A549 (cell line): ENCODE measurements at regions of chr3 and their contacts with region 1.

Region 1: DNA sequence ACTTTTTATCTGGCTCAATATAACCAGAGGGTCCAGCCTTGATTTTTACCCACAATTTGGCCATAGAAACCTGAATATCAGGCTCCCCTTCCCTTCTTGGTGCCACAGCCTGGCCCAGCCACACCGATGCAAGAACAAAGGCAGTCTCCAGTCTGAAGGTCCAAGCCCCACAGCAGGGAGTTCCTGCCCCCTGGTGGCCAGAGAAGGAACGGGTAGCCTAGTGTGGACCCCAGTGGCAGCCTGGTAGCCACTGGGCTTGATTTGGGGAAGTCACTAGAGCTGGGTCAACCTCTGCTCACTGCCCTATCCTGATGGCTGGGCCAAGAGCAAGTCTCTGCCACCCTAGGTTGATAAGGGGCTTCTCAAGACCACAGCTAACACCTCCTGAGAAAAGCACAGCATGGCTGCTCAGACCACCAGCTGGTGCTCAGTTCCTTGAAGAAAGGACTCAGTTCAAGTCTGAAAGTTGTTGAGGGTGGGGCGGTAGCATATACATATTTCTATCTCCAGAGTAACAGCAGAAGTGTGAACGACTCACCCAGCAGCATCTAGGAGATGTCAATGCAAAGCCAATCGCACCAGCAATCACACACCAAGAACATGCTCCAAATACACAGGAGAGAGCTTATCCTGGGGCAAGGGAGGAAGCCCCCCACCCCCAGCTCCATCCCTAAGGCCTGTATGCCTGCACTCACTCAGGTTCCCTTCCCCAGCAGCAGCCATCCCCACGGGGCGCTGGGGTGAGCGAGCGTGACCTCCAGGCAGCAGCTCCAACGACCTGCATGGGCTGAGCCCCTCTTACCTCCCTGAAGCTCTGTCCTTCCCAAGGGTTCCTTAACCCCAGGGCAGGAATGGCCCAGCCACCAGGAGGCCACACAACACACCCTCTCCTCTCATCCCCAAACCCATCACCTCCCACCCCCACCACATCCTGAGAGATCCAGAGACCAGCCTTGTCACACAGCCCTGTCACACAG is 7.6 kb downstream of the PFKFB4 start:
- DNase-seq: peak in 1 of 2 experiments; percentile 69
- ATAC-seq: peak; percentile 45 to 90
- H3K4me3 ChIP-seq: no peak overlapping the region
- H3K27ac ChIP-seq: 0 out of 6 replicates have a peak overlapping the region, but pooled peaks of 1 of the 2 experiments have one; percentile 48
- H3K4me1 ChIP-seq: no peaks in the 10 kb centered on the region
- CTCF ChIP-seq: peak; percentile 74
- EP300 ChIP-seq: no peak
- POLR2A ChIP-seq: no peak
- RAD21 ChIP-seq: peak; percentile 76 to 87

Region 2: GRCh38 chr3:48273594-48274211 is 275.3 kb before region 1 on chr3:
- CTCF ChIA-PET with region 1: interaction called, 17 read pairs
- POLR2A ChIA-PET with region 1: no interaction called
- DNase-seq: peak; percentile 54 to 58
- ATAC-seq: peak; percentile 87 to 91
- H3K4me3 ChIP-seq: no peak overlapping the region
- H3K27ac ChIP-seq: no peak overlapping the region
- H3K4me1 ChIP-seq: no peaks in the 10 kb centered on the region
- CTCF ChIP-seq: peak; percentile 78
- EP300 ChIP-seq: no peak
- POLR2A ChIP-seq: no peak
- RAD21 ChIP-seq: peak; percentile 80 to 88

Region 3: DNA sequence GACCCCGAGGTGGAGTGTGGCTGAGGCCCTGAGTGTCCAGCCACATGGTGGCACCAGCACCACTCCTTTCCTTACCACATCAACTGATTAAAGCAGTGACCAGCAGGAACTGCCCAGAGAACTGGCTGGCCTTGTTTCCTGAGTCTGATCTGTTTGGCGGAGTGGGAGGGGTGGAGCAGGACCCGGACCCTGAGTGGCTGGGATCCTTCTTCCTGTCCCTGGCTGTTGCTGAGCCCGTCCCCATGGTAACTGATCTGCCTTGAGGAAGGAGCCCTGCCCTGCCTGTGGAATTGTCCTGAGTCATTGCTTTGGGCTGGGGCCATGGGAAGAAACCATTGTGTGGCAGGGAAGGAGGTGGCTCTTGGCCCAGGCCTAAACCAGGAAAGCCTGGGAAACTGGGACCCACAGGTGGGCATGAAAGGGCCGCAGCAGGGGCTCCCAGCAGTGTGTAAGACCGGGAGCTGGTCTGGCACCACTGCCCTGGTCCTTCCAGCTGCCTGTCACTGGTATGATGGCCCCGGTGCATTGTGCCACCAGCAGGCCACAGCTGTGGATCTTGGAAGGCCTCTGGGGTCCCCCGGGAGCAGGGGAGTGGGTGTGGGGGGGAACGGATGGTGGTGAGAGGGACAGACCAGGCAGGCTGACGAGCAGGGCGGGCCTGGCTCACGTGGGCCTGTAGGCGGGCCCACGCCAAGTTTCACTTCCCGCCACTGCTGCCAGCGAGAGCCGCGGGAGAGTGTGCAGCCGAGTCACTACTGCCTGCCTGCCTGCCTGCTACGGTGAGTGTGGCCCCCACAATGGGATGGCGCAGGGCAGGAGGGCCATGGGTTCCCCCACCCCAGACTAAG is 83.3 kb before region 1 on chr3:
- CTCF ChIA-PET with region 1: interaction called, 39 read pairs
- POLR2A ChIA-PET with region 1: no interaction called
- DNase-seq: peak; percentile 97 to 98
- ATAC-seq: peak; percentile 90 to 93
- H3K4me3 ChIP-seq: peak overlapping the region; percentile 37
- H3K27ac ChIP-seq: peak overlapping the region; percentile 96 to 99
- H3K4me1 ChIP-seq: peaks cover 52% of the 10 kb centered on the region
- CTCF ChIP-seq: peak; percentile 60
- EP300 ChIP-seq: no peak
- POLR2A ChIP-seq: peak; percentile 58
- RAD21 ChIP-seq: peak; percentile 75

Region 4: DNA sequence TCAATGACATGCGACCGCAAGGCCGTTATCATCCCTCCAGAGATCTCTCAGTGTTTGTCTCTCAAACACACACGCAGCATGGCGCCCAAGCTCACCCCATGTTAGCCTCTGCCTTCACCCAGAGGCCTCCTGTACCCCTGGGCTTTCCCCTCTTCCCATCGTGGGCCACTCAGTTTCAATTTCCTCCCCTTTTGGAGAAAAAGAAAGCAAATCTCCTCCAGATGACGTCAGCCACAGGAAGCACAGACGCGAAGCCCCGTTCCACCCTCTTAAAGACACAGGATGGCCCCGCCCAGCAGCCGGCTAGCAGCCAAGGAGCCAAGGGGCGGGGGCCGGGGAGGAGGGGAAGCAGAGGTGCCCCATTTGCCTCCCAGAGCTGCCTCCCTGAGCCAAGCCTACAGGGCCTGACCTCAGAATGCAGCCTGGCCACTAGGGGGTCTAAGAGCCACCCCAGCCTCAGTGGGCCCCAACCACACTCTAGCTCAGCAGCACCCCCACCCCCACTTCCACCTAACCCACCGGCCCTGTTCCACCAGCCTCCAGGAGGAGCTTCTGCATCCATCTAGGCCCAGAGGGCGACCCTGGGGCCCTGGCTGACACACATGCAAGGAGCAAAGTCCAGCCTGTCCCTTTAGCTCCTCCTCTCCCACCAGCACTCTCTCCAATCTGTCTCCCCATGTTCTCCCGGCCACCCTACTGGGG is 76.0 kb before region 1 on chr3:
- CTCF ChIA-PET with region 1: interaction called, 14 read pairs
- POLR2A ChIA-PET with region 1: no interaction called
- DNase-seq: peak; percentile 89 to 92
- ATAC-seq: peak; percentile 89 to 91
- H3K4me3 ChIP-seq: peak overlapping the region; percentile 76
- H3K27ac ChIP-seq: peak overlapping the region; percentile 96 to 97
- H3K4me1 ChIP-seq: peaks cover 29% of the 10 kb centered on the region
- CTCF ChIP-seq: peak; percentile 31; the same call in 1 of the 3 replicates
- EP300 ChIP-seq: no peak
- POLR2A ChIP-seq: peak; percentile 36
- RAD21 ChIP-seq: peak; percentile 33 to 35; a peak in 3 of 5 replicates

Region 5: DNA sequence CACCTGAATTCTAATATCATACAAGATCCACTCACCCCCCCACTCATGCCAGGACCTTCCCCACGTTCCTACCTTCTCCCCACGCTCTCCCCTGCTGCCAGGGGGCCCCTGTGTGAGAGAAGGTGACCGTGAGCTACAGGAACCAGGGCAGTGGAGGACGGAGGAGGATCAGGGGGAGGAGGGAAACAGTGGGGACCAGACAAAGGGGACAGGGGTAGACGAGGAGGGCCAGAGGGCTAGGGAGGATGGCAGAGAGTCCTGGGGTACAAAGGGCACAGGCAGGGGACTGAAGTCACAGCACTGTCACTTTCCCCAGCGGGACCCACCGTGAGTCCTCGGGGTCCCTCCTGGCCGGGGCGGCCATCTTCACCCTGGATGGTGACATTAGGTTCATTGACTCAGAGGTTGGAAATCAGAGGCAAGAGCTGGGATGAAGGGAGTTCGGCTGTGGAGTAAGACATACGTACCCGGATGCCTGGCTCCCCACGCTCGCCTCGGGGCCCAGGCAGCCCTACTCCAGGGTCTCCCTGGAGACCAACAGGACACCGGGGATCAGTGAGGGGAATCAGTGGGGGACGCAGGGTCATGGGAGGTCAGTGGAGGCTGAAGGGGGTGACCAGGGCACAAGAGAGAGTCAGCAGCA is 20.9 kb after region 1 on chr3:
- CTCF ChIA-PET with region 1: no interaction called
- POLR2A ChIA-PET with region 1: no interaction called
- DNase-seq: no peak
- ATAC-seq: no peak
- H3K4me3 ChIP-seq: no peak overlapping the region
- H3K27ac ChIP-seq: no peak overlapping the region
- H3K4me1 ChIP-seq: peaks cover 39% of the 10 kb centered on the region
- CTCF ChIP-seq: no peak
- EP300 ChIP-seq: no peak
- POLR2A ChIP-seq: no peak
- RAD21 ChIP-seq: no peak